Activated CD4-positive, alpha-beta memory T cell treated with anti-CD3 and anti-CD28 coated beads for 36 hours (primary cell): ENCODE measurements at regions of chr18 and their contacts with region 1.

Region 1: GRCh38 chr18:13216092-13216582 is 2.4 kb upstream of the LDLRAD4 start:
- DNase-seq: peak; percentile 77
- H3K4me3 Mint-ChIP-seq: peak overlapping the region; percentile 67
- H3K27ac Mint-ChIP-seq: no peak overlapping the region
- H3K4me1 Mint-ChIP-seq: peaks cover 19% of the 10 kb centered on the region
- H3K27me3 Mint-ChIP-seq: peaks cover 40% of the 10 kb centered on the region

Region 2: GRCh38 chr18:13067124-13067523 is 149.0 kb before region 1 on chr18:
- CTCF ChIA-PET with region 1: no interaction called
- POLR2A ChIA-PET with region 1: no interaction called
- intact Hi-C with region 1: no loop called
- DNase-seq: peak; percentile 36
- H3K4me3 Mint-ChIP-seq: no peak overlapping the region
- H3K27ac Mint-ChIP-seq: peak overlapping the region; percentile 10
- H3K4me1 Mint-ChIP-seq: peaks cover 20% of the 10 kb centered on the region
- H3K27me3 Mint-ChIP-seq: no peaks in the 10 kb centered on the region

Region 3: GRCh38 chr18:13313006-13313686 is 97.0 kb after region 1 on chr18:
- CTCF ChIA-PET with region 1: no interaction called
- POLR2A ChIA-PET with region 1: no interaction called
- intact Hi-C with region 1: no loop called
- DNase-seq: peak; percentile 36
- H3K4me3 Mint-ChIP-seq: no peak overlapping the region
- H3K27ac Mint-ChIP-seq: no peak overlapping the region
- H3K4me1 Mint-ChIP-seq: peaks cover 24% of the 10 kb centered on the region
- H3K27me3 Mint-ChIP-seq: no peaks in the 10 kb centered on the region

Region 4: GRCh38 chr18:13375302-13376255 is 159.4 kb after region 1 on chr18:
- CTCF ChIA-PET with region 1: interaction called, 59 read pairs
- POLR2A ChIA-PET with region 1: interaction called, 10 read pairs
- intact Hi-C with region 1: loop called (anchors 1 kb)
- DNase-seq: peak; percentile 92
- H3K4me3 Mint-ChIP-seq: peak overlapping the region; percentile 49
- H3K27ac Mint-ChIP-seq: peak overlapping the region; percentile 97
- H3K4me1 Mint-ChIP-seq: peaks cover 79% of the 10 kb centered on the region
- H3K27me3 Mint-ChIP-seq: no peaks in the 10 kb centered on the region

Region 5: GRCh38 chr18:13464432-13465123 is 248.4 kb after region 1 on chr18:
- CTCF ChIA-PET with region 1: interaction called, 6 read pairs
- POLR2A ChIA-PET with region 1: no interaction called
- intact Hi-C with region 1: loop called (anchors 10 kb)
- DNase-seq: peak; percentile 83
- H3K4me3 Mint-ChIP-seq: peak overlapping the region; percentile 86
- H3K27ac Mint-ChIP-seq: peak overlapping the region; percentile 95
- H3K4me1 Mint-ChIP-seq: peaks cover 56% of the 10 kb centered on the region
- H3K27me3 Mint-ChIP-seq: no peaks in the 10 kb centered on the region

Region 6: DNA sequence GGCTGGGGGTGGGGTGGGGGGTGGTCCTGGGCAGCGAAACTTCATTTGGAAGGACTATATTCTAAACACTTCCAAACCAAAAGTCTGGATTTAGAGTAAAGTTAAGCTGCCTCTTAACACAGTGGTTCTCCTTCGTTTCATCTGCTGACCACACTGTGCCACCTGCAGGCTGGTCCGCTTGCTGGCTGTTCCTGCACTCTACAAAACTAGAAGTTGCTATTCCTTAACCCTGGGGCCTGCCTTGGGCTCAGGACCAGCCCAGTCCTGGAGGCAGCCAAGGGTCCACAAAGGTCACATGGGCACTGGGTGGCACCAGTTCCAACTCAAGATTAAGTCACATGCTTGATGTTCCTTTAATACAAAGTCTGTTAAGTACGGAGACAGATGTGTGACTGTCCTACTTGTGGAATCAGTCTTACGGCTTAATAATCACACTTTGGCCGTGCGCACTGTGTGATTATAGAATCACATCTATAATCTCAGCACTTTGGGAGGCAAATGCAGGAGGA is 314.8 kb after region 1 on chr18:
- CTCF ChIA-PET with region 1: interaction called, 9 read pairs
- POLR2A ChIA-PET with region 1: no interaction called
- intact Hi-C with region 1: loop called (anchors 5 kb)
- DNase-seq: peak; percentile 35
- H3K4me3 Mint-ChIP-seq: no peak overlapping the region
- H3K27ac Mint-ChIP-seq: no peak overlapping the region
- H3K4me1 Mint-ChIP-seq: peaks cover 24% of the 10 kb centered on the region
- H3K27me3 Mint-ChIP-seq: no peaks in the 10 kb centered on the region

Region 7: GRCh38 chr18:13629841-13630715 is 413.9 kb after region 1 on chr18:
- CTCF ChIA-PET with region 1: interaction called, 30 read pairs
- POLR2A ChIA-PET with region 1: no interaction called
- intact Hi-C with region 1: loop called (anchors 1 kb)
- DNase-seq: peak; percentile 63
- H3K4me3 Mint-ChIP-seq: no peak overlapping the region
- H3K27ac Mint-ChIP-seq: no peak overlapping the region
- H3K4me1 Mint-ChIP-seq: peaks cover 9% of the 10 kb centered on the region
- H3K27me3 Mint-ChIP-seq: no peaks in the 10 kb centered on the region